ENCODE measurements at regions of chr4 and their contacts with region 1.

Region 1: DNA sequence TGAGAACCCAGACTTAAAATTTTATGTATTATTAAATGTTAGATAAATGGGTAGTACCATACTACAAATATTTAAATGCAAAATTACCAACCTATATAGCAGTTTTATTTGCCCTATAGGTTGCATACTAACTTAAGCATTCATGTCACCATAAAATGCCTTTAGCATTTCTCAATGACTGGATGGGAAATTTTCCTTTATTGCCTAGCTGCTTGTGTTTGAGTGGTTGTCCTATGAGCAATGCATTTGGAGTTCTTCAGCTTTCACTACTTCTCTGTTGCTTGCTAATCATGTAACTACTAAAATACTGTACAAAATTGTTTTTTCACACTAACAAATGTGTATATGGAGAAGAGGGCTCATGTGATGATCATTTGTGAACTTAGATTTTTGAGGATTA is 44.2 kb upstream of the CEP135 start:
- DNase-seq: no peak

Region 2: GRCh38 chr4:55892156-55892555 is 12.4 kb before region 1 on chr4:
- intact Hi-C with region 1: no loop called
- DNase-seq: no peak

Region 3: DNA sequence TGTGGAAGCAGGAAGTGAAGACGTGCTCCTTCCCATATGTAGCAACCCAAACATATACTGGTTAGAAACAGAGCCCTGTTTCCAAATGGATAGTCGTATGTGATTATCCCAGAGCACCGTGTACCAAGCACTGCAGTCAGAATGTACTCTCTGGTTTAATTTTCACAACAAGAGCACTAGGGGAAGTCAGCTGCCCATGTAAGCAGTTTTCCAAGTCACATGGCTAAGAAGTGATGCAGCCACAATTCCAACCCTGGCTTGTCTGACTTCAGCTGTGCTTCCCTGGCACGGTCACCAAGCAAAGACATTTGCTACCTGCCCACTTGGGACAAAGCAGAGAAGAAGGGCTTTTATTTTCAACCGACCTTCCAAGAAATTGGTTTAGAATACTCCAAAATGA is 16.0 kb after region 1 on chr4:
- intact Hi-C with region 1: loop called in 1 of 2 experiments (anchors 2 kb)
- DNase-seq: no peak

Region 4: GRCh38 chr4:56927196-56927595 is 1022.6 kb after region 1 on chr4:
- intact Hi-C with region 1: loop called in 1 of 2 experiments (anchors 5 kb)
- DNase-seq: no peak